Activated CD4-positive, alpha-beta T cell treated with anti-CD3 and anti-CD28 coated beads, Interleukin-2, amount 10 ng/mL, durations not matched to agents 24 days and 14 days (primary cell): ENCODE measurements at regions of chr20 and their contacts with region 1.

Region 1: GRCh38 chr20:21529863-21530262 is 16.0 kb upstream of the NKX2-2 start:
- DNase-seq: no peak
- H3K4me3 Mint-ChIP-seq: no peak overlapping the region
- H3K27ac Mint-ChIP-seq: no peak overlapping the region
- H3K4me1 Mint-ChIP-seq: peaks cover 2% of the 10 kb centered on the region
- H3K27me3 Mint-ChIP-seq: peaks cover 60% of the 10 kb centered on the region

Region 2: DNA sequence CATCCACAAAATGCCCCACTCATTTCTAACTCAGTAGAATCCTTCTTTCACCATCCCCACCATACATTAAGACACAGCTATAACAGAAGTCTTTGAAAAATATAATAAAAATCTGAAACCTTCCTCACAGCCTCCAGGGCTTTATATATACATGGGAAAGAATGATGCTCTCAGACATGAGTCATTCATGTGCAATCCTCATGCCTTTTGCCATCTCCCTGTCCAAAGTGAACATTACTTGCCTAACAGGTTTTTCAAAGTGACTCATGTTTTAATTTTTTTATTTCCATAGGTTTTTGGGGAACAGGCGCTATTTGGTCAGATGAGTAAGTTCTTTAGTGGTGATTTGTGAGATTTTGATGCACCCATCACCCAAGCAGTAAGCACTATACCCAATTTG is 980.1 kb before region 1 on chr20:
- intact Hi-C with region 1: no loop called
- DNase-seq: no peak
- H3K4me3 Mint-ChIP-seq: no peak overlapping the region
- H3K27ac Mint-ChIP-seq: peak overlapping the region; percentile 14
- H3K4me1 Mint-ChIP-seq: peaks cover 27% of the 10 kb centered on the region
- H3K27me3 Mint-ChIP-seq: no peaks in the 10 kb centered on the region

Region 3: GRCh38 chr20:21490095-21490494 is 39.8 kb before region 1 on chr20:
- intact Hi-C with region 1: no loop called
- DNase-seq: no peak
- H3K4me3 Mint-ChIP-seq: no peak overlapping the region
- H3K27ac Mint-ChIP-seq: no peak overlapping the region
- H3K4me1 Mint-ChIP-seq: no peaks in the 10 kb centered on the region
- H3K27me3 Mint-ChIP-seq: peaks cover 46% of the 10 kb centered on the region

Region 4: DNA sequence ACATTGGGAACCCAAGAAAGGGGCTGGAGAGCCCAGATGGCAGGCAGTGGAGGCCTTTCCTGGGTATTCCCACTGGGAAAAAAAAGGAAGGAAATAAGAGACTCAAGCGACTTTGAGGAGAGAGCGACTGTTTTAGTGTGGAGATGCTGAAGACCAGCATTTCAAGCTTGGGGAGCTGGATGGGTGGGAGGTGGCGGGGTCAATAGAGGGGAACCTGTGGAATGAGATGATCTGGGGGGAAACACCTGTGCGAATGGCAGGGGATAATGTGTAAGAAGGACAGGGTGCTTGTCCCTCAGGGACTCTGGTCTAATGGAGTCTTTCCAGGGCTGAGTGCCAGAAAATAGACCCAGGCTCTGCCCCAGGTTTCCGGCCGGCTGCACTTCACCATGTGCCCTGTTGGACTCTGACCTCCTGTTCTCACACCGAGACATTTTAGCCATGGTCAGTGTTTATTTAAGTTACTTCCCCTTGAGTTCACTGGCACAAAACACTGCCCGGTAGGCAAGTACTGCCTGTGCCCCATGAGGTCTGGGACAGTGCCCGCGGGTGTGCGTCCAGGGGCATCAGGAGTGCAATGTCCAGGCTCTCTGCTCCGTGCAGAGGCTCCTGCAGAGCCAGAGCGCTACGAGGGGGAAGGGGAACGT is 34.4 kb after region 1 on chr20:
- intact Hi-C with region 1: no loop called
- DNase-seq: no peak
- H3K4me3 Mint-ChIP-seq: no peak overlapping the region
- H3K27ac Mint-ChIP-seq: no peak overlapping the region
- H3K4me1 Mint-ChIP-seq: peaks cover 8% of the 10 kb centered on the region
- H3K27me3 Mint-ChIP-seq: peaks cover 25% of the 10 kb centered on the region

Region 5: GRCh38 chr20:21615617-21616080 is 85.8 kb after region 1 on chr20:
- intact Hi-C with region 1: loop called (anchors 2 kb)
- DNase-seq: peak; percentile 81
- H3K4me3 Mint-ChIP-seq: no peak overlapping the region
- H3K27ac Mint-ChIP-seq: no peak overlapping the region
- H3K4me1 Mint-ChIP-seq: peaks cover 3% of the 10 kb centered on the region
- H3K27me3 Mint-ChIP-seq: peaks cover 6% of the 10 kb centered on the region